Right ventricle myocardium inferior (tissue), 1 donor: ENCODE measurements at regions of chr19 and their contacts with region 1.

Region 1: GRCh38 chr19:48110350-48110966 is at the start of gene PLA2G4C:
- DNase-seq: peak; percentile 96
- ATAC-seq: peak; percentile 93
- total RNA-seq, gene PLA2G4C: 40.8 TPM

Region 2: GRCh38 chr19:48152551-48152950 is 42.1 kb after region 1 on chr19:
- intact Hi-C with region 1: loop called (anchors 1 kb)
- DNase-seq: no peak
- ATAC-seq: no peak